Posterior vena cava (tissue), 2 donors: ENCODE measurements at regions of chr14 and their contacts with region 1.

Region 1: GRCh38 chr14:92649935-92650545 is 98.4 kb downstream of the LGMN start:
- DNase-seq: peak; percentile 94

Region 2: DNA sequence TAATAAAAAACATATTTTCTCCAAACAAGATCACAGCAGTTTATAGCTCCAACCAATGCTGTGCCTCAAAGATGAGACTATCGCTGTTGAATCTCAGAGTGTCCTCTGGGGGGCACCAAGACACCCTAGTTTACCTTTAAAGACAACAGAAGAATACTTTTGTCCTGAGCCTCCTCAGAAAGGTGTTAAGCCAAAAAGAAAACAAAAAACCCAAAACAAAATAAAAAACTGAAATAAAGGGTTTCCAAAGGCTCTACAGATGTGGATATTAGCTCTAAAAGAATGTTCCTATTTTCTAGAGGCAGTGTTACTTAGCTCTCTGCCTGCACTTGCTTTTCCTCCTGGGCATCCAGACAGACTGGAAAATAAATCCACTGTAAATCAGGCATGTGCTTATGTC is 1746.9 kb before region 1 on chr14:
- intact Hi-C with region 1: no loop called
- DNase-seq: no peak

Region 3: DNA sequence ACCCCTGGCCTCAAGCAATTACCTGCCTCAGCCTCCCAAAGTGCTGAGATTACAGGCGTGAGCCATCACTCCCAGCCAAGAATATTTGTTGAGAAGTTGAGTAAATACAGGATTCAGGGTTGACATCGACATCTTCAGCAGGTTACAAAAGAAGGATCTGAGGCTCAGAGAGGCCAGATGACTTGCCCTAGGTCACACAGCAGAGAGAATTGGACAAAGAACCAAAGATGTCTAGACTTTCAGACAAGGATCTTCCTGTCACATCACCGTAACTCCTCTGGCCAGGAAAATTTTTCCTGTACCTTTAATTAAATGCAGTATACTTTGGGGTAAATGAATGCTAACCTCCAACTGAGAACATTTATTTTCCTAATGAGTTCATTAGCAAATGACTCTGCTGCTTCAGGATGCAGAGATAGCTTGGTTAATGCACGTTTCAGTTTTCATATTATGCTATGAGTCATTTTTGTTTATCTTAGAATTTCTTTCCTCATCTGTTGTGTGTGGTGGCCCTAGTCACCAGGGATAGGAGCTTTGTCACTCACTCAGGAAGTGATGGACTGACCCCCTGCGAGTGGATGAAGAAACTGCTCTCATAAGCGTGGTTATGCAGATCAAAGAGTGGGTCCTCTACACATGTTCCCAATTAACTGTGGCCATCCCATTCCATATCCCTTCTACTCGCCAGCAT is 791.7 kb before region 1 on chr14:
- intact Hi-C with region 1: no loop called
- DNase-seq: no peak

Region 4: DNA sequence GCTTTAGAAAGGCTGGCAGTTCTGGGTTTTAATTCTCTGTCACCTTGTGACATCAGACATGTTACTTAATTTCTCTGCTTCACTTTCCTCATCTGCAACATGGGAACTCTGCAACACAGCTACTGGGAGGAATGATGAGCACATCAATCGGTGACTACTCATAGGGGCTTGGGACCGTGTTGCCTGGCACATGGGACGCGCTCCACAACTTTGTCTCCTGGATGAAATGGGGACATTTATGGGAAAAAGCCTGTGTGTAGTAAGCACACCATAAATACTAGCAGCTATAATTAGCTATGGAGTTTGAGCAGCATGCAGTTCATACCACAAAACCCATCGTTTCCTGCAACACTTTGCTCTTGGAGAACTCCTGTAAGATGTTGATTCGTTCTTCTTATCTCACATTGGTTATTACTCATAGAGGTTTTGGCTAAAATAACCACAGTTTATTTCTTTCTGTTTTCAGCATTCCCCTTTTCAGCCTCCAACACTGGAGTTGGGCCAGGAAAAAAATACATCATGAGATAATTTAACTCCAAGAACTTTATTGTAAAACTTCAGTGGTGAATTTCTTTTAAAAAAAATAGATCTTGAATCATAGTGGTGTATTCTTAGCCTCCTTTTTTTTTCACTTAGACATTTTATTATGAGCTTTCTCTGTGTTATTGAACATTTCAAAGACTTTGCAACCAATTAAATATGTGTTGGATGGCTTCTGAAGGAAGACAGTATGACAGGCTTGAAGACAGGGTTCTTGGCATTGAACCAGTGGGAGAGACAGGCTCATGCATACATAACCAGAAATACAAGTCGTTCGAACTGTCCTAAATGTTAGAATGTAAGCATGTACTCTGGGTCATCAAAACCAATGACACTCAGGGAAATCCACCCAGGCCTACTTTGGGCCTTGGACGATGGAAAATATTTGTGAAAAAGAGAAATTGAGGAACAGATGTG is 63.8 kb before region 1 on chr14:
- intact Hi-C with region 1: loop called in 1 of 2 experiments (anchors 10 kb)
- DNase-seq: peak; percentile 88